Heart right ventricle (tissue), 16 donors: ENCODE measurements at regions of chr18 and their contacts with region 1.

Region 1: DNA sequence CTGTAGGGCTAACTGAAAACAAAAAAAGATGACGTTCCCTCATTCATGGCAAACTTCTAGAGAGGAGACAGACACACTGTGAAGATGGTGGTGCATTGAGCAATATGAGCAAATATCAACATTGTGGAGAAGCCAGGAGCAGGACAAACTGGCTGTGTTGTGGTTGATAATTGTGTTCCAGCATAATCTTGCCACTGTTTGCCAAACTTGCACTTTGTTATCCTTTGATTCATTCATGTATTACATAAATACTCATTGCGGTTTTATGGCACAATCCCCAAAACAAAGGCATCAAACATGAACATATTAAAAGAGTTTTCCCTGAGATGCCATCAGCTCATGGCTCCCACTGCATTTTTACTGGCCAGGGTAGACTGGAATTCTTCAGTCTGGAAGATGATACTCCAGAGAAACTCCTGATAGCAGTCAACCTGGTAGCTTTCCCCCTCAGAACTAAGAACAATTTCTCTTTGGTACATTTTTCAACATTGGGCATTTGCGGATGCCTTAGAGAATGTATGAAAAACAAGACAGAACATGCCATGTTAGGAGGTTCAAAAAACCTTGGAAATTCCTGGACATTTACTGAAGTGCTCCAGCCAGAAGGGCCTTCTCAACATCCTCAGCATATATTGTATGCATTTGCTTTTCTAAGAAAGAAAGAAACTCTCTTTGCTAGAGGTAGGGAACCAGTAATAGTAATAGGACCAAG is 487.4 kb upstream of the CELF4 start:
- DNase-seq: no peak
- ATAC-seq: no peak
- H3K4me3 ChIP-seq: no peak overlapping the region
- H3K27ac ChIP-seq: no peak overlapping the region
- H3K4me1 ChIP-seq: no peaks in the 10 kb centered on the region
- H3K27me3 ChIP-seq: no peaks in the 10 kb centered on the region
- CTCF ChIP-seq: no peak

Region 2: GRCh38 chr18:38033282-38033681 is 19.8 kb before region 1 on chr18:
- intact Hi-C with region 1: loop called in 1 of 10 experiments (anchors 2 kb)
- DNase-seq: no peak
- ATAC-seq: no peak
- H3K4me3 ChIP-seq: no peak overlapping the region
- H3K27ac ChIP-seq: no peak overlapping the region
- H3K4me1 ChIP-seq: no peaks in the 10 kb centered on the region
- H3K27me3 ChIP-seq: peaks cover 0 to under 1% (median 0%) of the 10 kb centered on the region in 7 donors
- CTCF ChIP-seq: no peak